ENCODE measurements at regions of chr1 and their contacts with region 1.

Region 1: DNA sequence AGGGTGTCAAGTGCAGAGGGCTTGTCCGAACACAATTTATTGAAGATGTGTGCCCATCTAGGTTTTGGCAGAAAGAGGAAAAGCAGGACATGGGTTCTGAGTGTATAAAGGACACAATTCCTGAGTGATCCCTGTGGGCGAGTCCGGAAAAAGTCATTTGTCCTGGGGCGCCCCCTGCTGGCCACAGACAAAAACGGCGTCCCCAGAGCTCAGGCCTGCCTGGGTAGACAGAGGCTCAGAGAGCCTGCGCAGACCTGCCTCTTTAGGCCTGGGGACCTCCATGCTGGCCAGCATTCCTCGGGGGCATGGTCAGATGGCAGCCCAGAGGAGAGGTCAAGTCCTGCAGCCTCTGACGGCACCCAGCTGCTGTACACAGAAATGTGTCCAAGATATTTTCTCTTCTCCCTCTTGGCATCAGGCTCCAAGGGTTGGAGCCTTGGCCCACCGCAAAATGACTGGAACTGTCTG is 65.5 kb upstream of the LRP8 start:
- DNase-seq: no peak
- ATAC-seq: peak; percentile 90
- H3K4me3 ChIP-seq: no peak overlapping the region
- H3K27ac ChIP-seq: no peak overlapping the region
- H3K4me1 ChIP-seq: peaks cover 4% of the 10 kb centered on the region; the same call in 1 of the 2 replicates
- H3K27me3 ChIP-seq: no peaks in the 10 kb centered on the region; the same call in 1 of the 2 replicates
- CTCF ChIP-seq: peak; percentile 94

Region 2: DNA sequence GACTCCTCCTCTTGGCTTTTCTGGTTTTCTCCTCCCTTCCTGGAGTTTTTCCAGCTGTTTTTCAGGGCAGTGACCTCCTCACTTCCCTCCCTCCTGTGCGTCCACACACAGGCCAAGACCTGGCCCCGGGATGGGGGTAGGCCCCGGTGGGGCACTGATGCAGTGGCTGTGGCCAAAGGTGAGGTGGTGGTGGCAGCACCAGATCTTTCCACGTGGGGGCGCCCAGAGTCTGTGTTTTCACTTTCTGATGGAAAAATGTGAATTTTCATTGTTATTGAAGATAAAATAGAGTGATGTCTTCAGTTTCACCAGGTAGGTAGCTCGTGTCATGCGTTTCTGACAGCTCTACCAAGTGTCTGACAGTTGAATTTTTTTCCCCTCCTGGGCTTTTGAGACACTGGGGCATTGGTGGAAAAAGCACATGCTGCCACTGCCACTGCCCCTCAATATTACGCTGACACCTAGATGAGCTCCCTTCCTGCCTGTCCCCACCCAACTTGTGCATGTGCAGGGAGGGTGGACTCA is 115.1 kb before region 1 on chr1:
- CTCF ChIA-PET with region 1: interaction called, 45 read pairs
- POLR2A ChIA-PET with region 1: no interaction called
- in situ Hi-C with region 1: no loop called
- intact Hi-C with region 1: loop called (anchors 1 kb)
- DNase-seq: peak; percentile 13
- ATAC-seq: peak; percentile 73
- H3K4me3 ChIP-seq: no peak overlapping the region
- H3K27ac ChIP-seq: no peak overlapping the region
- H3K4me1 ChIP-seq: no peaks in the 10 kb centered on the region
- H3K27me3 ChIP-seq: no peaks in the 10 kb centered on the region
- CTCF ChIP-seq: peak; percentile 92